Natural killer cell (primary cell): ENCODE measurements at regions of chr14 and their contacts with region 1.

Region 1: DNA sequence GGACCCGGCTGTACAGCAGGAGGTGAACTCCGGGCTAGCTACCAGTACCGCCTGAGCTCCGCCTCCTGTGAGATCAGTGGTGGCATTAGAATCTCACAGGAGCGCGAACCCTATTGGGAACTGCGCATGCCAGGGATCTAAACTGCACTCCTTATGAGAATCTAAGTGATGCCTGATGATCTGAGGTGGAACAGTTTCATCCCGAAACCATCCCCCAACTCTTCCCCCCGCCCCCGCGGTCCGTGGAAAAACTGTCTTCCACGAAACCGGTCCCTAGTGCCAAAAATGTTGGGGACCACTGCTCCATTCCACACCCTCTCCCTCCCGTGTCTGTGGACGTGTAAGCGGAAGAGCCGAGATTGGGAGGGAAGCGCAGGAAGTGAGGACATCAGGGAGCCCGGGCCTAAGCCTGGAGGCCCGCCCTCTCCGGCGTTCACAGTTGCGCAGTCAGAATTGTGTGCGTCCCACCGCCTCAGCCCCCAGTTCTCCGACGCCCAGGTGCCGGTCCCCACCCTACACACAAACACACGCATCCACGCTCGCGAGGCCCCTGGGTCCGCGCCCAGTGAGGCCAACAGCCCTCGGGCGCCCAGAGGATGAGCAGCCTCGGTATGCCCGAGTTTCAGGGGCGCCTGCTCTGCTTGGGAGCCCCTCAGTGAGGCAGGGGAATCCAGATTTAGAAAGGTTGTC is 1.8 kb upstream of the RNASE4 start:
- DNase-seq: peak; percentile 68 to 93
- ATAC-seq: peak; percentile 61 to 76 (median 64)
- H3K4me3 ChIP-seq: peak overlapping the region; percentile 95
- H3K4me3 Mint-ChIP-seq: no peak overlapping the region
- H3K27ac ChIP-seq: peak overlapping the region; percentile 99
- H3K27ac Mint-ChIP-seq: no peak overlapping the region
- H3K4me1 ChIP-seq: peaks cover 44% of the 10 kb centered on the region
- H3K4me1 Mint-ChIP-seq: no peaks in the 10 kb centered on the region
- H3K27me3 ChIP-seq: no peaks in the 10 kb centered on the region
- H3K27me3 Mint-ChIP-seq: no peaks in the 10 kb centered on the region
- CTCF ChIP-seq: no peak

Region 2: GRCh38 chr14:20343092-20343861 is 339.3 kb before region 1 on chr14 and contains the start of gene PARP2:
- intact Hi-C with region 1: loop called (anchors 2 kb)
- DNase-seq: peak; percentile 83 to 97
- ATAC-seq: peak; percentile 80 to 90 (median 82)
- H3K4me3 ChIP-seq: peak within 1 kb of the TSS; percentile 94
- H3K4me3 Mint-ChIP-seq: peak within 1 kb of the TSS; percentile 96
- H3K27ac ChIP-seq: peak within 1 kb of the TSS; percentile 90
- H3K27ac Mint-ChIP-seq: peak within 1 kb of the TSS; percentile 97 to 99
- H3K4me1 ChIP-seq: peaks cover 6% of the 10 kb centered on the region
- H3K4me1 Mint-ChIP-seq: peaks cover 14 to 22% of the 10 kb centered on the region in 2 donors
- H3K27me3 ChIP-seq: no peaks in the 10 kb centered on the region
- H3K27me3 Mint-ChIP-seq: no peaks in the 10 kb centered on the region
- CTCF ChIP-seq: no peak
- total RNA-seq, gene PARP2: 18.2 to 28.3 (median 22.2) TPM

Region 3: DNA sequence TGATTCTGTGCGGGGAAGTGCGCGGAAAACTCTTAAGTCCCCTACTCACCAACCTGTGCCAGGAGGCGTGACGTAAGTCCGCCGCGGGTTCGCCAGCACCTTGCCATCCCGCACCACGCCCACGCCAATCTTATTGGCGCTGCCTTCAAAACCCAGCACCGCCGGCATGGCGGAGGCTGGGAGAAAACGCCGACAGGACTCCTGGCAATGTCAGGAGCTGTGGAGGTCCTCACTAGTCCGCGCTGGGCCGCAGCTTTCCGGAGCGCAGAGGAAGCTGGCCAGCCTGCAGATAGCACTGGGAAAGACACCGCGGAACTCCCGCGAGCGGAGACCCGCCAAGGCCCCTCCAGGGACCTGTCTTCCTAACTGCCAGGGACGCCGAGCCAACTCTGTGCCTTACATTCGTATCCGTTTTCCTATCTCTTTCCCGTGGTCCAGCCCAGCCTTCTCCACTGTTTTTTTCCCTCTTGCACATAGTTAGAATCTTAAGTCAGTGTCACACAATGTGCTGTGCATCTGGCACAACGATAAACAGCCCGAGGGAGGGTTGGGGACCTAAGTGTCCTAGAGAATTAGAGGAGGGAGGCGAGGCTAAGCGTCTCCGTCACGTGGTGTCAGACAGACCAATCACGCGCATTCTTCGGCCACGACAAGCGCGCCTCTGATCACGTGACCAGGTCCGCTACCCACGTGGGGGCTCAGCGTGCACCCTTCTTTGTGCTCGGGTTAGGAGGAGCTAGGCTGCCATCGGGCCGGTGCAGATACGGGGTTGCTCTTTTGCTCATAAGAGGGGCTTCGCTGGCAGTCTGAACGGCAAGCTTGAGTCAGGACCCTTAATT is 227.8 kb before region 1 on chr14 and contains the starts of genes APEX1 and OSGEP:
- intact Hi-C with region 1: loop called (anchors 2 kb)
- DNase-seq: peak; percentile 94 to 100
- ATAC-seq: peak; percentile 87 to 92 (median 88)
- H3K4me3 ChIP-seq: peak within 1 kb of the TSS; percentile 79
- H3K4me3 Mint-ChIP-seq: no peak within 1 kb of the TSS
- H3K27ac ChIP-seq: peak within 1 kb of the TSS; percentile 89
- H3K27ac Mint-ChIP-seq: no peak within 1 kb of the TSS
- H3K4me1 ChIP-seq: peaks cover 27% of the 10 kb centered on the region
- H3K4me1 Mint-ChIP-seq: peaks cover 2 to 23% of the 10 kb centered on the region in 2 donors
- H3K27me3 ChIP-seq: no peaks in the 10 kb centered on the region
- H3K27me3 Mint-ChIP-seq: no peaks in the 10 kb centered on the region
- CTCF ChIP-seq: no peak
- total RNA-seq, gene APEX1: 66.0 to 77.6 (median 74.9) TPM
- total RNA-seq, gene OSGEP: 60.1 to 65.4 (median 63.3) TPM

Region 4: DNA sequence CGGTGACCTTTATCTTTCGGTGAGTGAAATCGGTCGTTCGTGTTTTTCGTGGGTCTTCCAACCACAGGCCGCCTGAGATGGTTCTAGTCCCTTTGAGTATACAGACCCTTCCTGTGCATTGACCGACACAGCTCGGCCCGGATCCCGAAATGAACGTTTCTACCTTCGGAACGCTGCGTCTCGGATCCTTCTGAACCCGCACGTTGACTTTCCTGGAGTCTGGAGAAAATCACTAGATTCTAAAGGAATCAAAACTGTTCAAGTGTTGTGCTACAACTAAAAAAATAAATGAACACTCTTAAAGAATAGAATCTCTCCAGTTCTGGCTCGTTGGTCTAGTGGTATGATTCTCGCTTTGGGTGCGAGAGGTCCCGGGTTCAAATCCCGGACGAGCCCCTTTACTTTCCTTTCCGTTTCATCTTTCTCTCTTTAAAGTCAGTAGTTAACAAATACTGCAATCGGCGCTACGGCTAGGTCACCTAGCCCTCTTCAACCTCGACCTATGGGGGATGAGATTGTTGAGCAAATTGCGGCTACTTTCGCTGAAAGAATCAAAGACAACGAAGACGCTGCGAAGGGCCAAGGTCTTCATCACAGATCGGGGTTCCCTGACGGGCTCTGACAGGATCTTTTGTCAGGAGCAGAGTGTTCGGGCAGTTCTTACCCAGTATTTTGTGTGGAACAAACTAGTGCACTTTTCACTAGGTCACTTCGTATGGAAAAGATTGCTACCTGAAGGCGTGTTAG is 49.7 kb before region 1 on chr14:
- intact Hi-C with region 1: loop called (anchors 1 kb)
- DNase-seq: peak in 1 of 2 donors; percentile 82
- ATAC-seq: peak; percentile 64 to 74 (median 66)
- H3K4me3 ChIP-seq: peak overlapping the region; percentile 44
- H3K4me3 Mint-ChIP-seq: peak overlapping the region; percentile 87
- H3K27ac ChIP-seq: no peak overlapping the region
- H3K27ac Mint-ChIP-seq: peak overlapping the region; percentile 84 to 93
- H3K4me1 ChIP-seq: peaks cover 32% of the 10 kb centered on the region
- H3K4me1 Mint-ChIP-seq: peaks cover 42 to 49% of the 10 kb centered on the region in 2 donors
- H3K27me3 ChIP-seq: peaks cover 9% of the 10 kb centered on the region
- H3K27me3 Mint-ChIP-seq: peaks cover 37 to 60% of the 10 kb centered on the region in 2 donors
- CTCF ChIP-seq: no peak

Region 5: DNA sequence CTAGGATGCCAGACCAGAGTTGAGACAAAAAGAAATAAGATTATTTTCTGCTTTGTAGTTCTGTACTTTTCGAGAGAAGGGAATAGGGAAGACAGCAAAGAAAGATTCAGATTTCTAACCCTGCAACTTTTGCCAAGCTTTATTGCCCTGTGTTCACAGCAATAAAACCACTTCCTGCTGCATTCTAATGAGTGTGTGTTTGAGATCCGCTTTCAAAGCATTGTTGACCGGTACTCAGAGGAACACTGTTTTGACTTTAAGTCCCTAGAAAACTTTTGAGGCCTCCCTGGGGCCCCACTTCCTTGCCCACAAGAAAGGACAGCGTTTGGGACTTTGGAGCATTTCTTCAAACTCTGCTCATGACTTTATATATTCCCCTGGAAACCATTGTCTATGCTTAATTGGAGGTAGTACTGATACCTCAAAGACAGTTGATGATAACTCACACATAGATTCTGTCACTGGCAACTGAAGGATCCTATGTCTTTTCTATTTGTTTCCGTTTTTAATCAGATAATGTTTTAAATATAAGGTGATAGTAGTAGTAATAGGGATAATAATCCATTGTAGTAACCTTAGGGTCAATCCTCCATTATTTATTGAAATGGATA is 99.8 kb after region 1 on chr14:
- intact Hi-C with region 1: no loop called
- DNase-seq: peak in 1 of 2 donors; percentile 49
- ATAC-seq: peak; percentile 85 to 90 (median 90)
- H3K4me3 ChIP-seq: peak overlapping the region; percentile 42
- H3K4me3 Mint-ChIP-seq: peak overlapping the region; percentile 86
- H3K27ac ChIP-seq: peak overlapping the region; percentile 71
- H3K27ac Mint-ChIP-seq: peak overlapping the region; percentile 92 to 95
- H3K4me1 ChIP-seq: peaks cover 27% of the 10 kb centered on the region
- H3K4me1 Mint-ChIP-seq: peaks cover 33 to 38% of the 10 kb centered on the region in 2 donors
- H3K27me3 ChIP-seq: no peaks in the 10 kb centered on the region
- H3K27me3 Mint-ChIP-seq: no peaks in the 10 kb centered on the region
- CTCF ChIP-seq: no peak